AG04449 (cell line): ENCODE measurements at regions of chr17 and their contacts with region 1.

Region 1: GRCh38 chr17:29931231-29931932 is 1.4 kb upstream of the SSH2 start:
- DNase-seq: no peak
- H3K4me3 ChIP-seq: peak overlapping the region; percentile 97
- CTCF ChIP-seq: peak; percentile 77

Region 2: GRCh38 chr17:29640413-29640812 is 291.0 kb before region 1 on chr17:
- CTCF ChIA-PET with region 1: interaction called, 136 read pairs
- POLR2A ChIA-PET with region 1: interaction called, 4 read pairs
- DNase-seq: peak; percentile 57
- H3K4me3 ChIP-seq: no peak overlapping the region
- CTCF ChIP-seq: no peak

Region 3: DNA sequence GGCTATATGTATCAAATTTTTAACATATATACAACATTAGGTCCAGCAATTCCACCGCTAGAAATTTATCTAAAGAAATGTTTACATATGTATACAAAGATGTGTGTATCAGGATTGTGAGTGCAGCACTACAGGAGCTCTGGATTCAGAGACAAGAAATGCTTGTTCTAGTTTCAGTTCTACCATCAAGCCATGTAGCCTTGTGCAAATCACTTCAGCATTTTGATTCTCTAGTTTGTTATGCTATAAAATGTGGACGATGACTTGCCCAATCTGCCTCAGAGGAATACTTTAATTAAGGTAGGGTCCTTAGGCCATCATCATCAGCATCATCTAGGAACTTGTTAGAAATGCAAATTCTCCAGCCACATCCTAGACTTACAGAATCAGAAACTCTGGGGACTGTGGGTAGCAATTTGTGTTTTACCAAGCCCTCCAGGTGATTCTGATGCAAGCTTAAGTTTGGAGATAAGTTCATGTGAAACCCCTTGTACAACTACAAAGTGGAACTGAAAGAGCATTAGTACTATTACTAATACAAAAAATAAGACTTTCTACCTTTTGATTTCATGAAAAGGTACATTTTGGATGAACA is 177.4 kb before region 1 on chr17:
- CTCF ChIA-PET with region 1: no interaction called
- POLR2A ChIA-PET with region 1: no interaction called
- DNase-seq: no peak
- H3K4me3 ChIP-seq: no peak overlapping the region
- CTCF ChIP-seq: no peak

Region 4: DNA sequence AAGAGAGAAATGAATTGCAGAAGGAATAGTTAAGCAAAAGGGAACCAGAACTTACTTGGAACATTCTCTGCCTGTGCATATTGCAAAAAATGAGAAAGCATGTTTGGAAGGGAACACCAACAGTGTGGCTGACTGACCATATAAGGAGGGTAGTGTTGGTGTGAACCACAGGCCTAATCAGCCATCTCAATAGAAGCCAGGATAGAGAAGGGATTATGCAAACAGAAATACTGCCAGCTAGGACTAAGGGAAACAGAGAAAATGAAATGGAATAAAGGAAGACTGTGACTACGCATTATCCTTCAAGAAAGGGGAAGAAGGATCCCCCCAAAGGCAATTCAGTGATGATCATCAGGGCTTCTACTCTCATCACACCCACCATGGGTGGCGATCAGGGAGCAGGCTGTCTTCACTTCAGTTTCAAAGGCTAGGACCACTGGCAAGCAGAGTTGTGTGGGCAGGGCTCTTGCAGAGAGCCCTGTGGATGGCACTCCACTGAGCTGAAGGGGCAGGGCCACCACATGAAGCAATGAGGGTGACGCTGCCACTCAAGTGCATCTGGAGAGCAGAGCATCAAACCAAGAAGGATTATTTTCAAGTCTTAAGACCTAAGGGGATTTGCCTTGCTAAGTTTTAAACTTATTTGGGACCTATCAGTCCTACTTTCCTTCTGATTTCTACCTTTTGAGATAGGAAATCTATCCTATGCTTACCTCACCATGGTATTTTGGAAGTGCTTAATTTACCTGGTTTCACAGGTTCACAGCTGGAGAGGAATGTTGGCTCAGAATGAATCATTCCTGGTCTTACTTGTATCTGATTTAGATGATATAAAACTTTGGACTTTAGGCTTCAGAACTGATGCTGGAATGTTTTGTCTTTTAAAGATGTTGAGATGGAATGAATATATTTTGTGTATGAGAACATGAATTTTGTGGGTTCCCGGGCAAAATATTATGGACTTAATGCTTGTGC is 141.9 kb before region 1 on chr17:
- CTCF ChIA-PET with region 1: interaction called, 13 read pairs
- POLR2A ChIA-PET with region 1: no interaction called
- DNase-seq: no peak
- H3K4me3 ChIP-seq: no peak overlapping the region
- CTCF ChIP-seq: no peak

Region 5: DNA sequence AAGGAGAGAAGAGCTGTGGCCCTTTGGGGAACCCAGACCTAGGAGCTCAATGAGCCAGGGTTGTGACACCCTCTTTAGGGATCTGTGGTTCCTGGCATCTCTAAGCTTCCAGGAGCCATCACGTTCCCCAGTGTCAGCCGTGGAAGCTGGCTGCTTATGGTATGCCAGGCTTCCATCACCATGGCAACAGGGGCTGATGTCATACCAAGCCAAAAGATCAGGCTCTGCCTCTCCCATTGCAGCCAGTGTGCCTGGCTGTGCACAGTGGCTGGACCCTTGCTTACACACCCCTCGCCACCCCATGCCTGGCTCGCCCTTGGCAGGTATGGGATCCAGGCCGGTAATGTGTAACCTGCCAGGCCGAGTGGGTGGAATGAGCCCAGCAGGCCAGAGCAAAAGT is 92.4 kb before region 1 on chr17:
- CTCF ChIA-PET with region 1: interaction called, 17 read pairs
- POLR2A ChIA-PET with region 1: no interaction called
- DNase-seq: no peak
- H3K4me3 ChIP-seq: no peak overlapping the region
- CTCF ChIP-seq: no peak

Region 6: GRCh38 chr17:29892201-29892600 is 39.2 kb before region 1 on chr17:
- CTCF ChIA-PET with region 1: interaction called, 10 read pairs
- POLR2A ChIA-PET with region 1: no interaction called
- DNase-seq: no peak
- H3K4me3 ChIP-seq: no peak overlapping the region
- CTCF ChIP-seq: no peak

Region 7: GRCh38 chr17:29958947-29959657 is 27.7 kb after region 1 on chr17:
- CTCF ChIA-PET with region 1: interaction called, 26 read pairs
- POLR2A ChIA-PET with region 1: no interaction called
- DNase-seq: no peak
- H3K4me3 ChIP-seq: no peak overlapping the region
- CTCF ChIP-seq: no peak

Region 8: GRCh38 chr17:30093463-30094147 is 162.2 kb after region 1 on chr17:
- CTCF ChIA-PET with region 1: interaction called, 153 read pairs
- POLR2A ChIA-PET with region 1: no interaction called
- DNase-seq: no peak
- H3K4me3 ChIP-seq: no peak overlapping the region
- CTCF ChIP-seq: peak; percentile 41